AG04450 (cell line): ENCODE measurements at regions of chr12 and their contacts with region 1.

Region 1: GRCh38 chr12:47715393-47715876 is 9.6 kb upstream of the RPAP3 start:
- DNase-seq: no peak
- H3K4me3 ChIP-seq: 0 out of 2 replicates have a peak overlapping the region, but pooled peaks have one; percentile 25
- H3K27ac ChIP-seq: no peak overlapping the region
- H3K27me3 ChIP-seq: no peaks in the 10 kb centered on the region
- CTCF ChIP-seq: peak; percentile 80

Region 2: DNA sequence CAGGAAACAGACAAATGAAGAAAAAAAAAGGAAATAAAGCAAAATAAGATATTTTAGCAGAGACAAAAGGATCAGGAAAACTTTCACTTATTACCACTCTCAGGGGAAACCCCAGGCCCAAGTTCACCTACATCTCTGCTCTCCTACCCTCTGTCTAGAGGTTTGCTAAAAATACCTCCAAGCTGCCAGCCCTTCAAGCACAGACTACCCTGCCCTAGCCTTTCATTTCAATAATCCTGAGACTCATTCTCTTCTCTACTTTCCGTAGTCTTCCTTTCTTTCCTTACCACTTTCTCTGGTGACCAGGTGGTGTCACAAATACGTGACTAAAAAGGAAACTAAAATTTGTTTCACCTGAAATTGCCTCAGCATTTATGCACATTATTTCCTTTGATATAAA is 43.4 kb before region 1 on chr12:
- CTCF ChIA-PET with region 1: no interaction called
- POLR2A ChIA-PET with region 1: no interaction called
- DNase-seq: no peak
- H3K4me3 ChIP-seq: no peak overlapping the region
- H3K27ac ChIP-seq: no peak overlapping the region
- H3K27me3 ChIP-seq: no peaks in the 10 kb centered on the region
- CTCF ChIP-seq: no peak

Region 3: DNA sequence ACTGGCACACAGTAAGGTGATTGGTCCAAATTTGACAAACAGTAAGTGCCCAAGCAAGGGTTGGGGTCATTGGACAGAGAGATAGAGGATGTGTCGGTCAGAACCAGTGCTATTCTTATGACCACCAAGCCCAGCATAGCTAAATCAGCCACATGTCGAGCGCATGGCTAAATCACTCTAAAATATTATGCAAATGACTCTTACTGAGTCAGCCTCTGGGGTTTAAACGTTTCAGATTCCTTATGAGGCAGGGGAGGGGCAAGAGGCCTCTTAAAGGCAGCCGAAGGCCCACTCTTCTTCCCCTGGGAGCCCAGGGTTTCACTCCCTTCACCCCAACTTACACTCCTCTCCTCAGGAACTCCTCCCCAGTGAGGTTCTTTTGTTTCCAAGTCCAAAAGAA is 10.5 kb after region 1 on chr12:
- CTCF ChIA-PET with region 1: interaction called, 28 read pairs
- POLR2A ChIA-PET with region 1: no interaction called
- DNase-seq: no peak
- H3K4me3 ChIP-seq: no peak overlapping the region
- H3K27ac ChIP-seq: peak overlapping the region; percentile 70
- H3K27me3 ChIP-seq: no peaks in the 10 kb centered on the region
- CTCF ChIP-seq: no peak

Region 4: GRCh38 chr12:47742253-47742825 is 26.9 kb after region 1 on chr12:
- CTCF ChIA-PET with region 1: interaction called, 78 read pairs
- POLR2A ChIA-PET with region 1: no interaction called
- DNase-seq: no peak
- H3K4me3 ChIP-seq: no peak overlapping the region
- H3K27ac ChIP-seq: no peak overlapping the region
- H3K27me3 ChIP-seq: peaks cover 36% of the 10 kb centered on the region
- CTCF ChIP-seq: peak; percentile 99

Region 5: DNA sequence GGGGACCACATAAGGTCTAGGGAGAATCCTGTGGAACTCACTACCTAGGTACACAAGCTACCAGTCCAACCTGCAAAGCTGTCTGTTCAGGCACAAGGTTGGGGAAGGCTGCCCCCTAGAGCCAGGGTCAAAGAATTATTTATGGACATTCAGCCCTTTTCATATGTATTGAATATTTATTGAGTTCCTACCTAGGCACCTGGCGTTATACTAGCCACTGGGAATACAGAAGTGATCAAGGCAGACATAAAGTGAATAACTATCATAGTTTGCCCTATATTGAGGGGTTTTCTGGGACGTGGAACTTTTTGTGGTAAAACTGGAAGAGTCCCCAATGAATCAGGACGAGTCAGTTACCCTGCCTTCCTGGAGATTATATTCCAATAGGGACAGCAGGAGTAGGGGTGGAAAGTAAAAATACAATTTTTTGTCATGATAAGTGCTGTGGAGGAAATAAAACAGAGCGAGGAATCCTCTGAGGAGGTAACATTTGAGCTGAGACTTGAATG is 51.8 kb after region 1 on chr12:
- CTCF ChIA-PET with region 1: interaction called, 152 read pairs
- POLR2A ChIA-PET with region 1: no interaction called
- DNase-seq: no peak
- H3K4me3 ChIP-seq: no peak overlapping the region
- H3K27ac ChIP-seq: no peak overlapping the region
- H3K27me3 ChIP-seq: no peaks in the 10 kb centered on the region
- CTCF ChIP-seq: peak; percentile 54

Region 6: GRCh38 chr12:47949441-47950308 is 234.2 kb after region 1 on chr12:
- CTCF ChIA-PET with region 1: interaction called, 12 read pairs
- POLR2A ChIA-PET with region 1: no interaction called
- DNase-seq: peak; percentile 55
- H3K4me3 ChIP-seq: no peak overlapping the region
- H3K27ac ChIP-seq: no peak overlapping the region
- H3K27me3 ChIP-seq: peaks cover 23% of the 10 kb centered on the region
- CTCF ChIP-seq: peak; percentile 92

Region 7: GRCh38 chr12:48311313-48311712 is 595.9 kb after region 1 on chr12:
- CTCF ChIA-PET with region 1: no interaction called
- POLR2A ChIA-PET with region 1: no interaction called
- DNase-seq: no peak
- H3K4me3 ChIP-seq: no peak overlapping the region
- H3K27ac ChIP-seq: no peak overlapping the region
- H3K27me3 ChIP-seq: no peaks in the 10 kb centered on the region
- CTCF ChIP-seq: no peak